ENCODE measurements at regions of chr5 and their contacts with region 1.

Region 1: DNA sequence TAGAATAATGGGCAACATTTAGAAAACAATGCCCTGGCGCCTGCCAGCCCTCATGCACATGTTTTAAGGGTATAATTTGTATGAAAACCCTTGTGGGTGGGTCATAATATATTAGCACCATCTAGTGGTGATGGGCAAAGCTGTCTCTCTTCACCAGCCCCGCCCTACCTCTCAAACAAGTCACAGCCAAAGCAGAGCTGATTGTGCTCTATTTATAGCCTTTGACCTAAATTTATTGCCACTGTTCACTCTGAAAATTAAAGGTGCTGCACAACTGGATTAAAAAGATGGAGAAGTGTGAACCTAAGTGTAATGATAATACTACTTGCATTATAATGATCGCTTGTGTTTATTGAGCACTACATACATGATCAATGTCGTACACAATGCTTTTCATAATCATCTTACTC is 131.9 kb upstream of the ANKH start:
- DNase-seq: peak; percentile 53
- H3K4me3 Mint-ChIP-seq: no peak overlapping the region
- H3K27ac Mint-ChIP-seq: no peak overlapping the region
- H3K4me1 Mint-ChIP-seq: peaks cover 21% of the 10 kb centered on the region
- H3K27me3 Mint-ChIP-seq: peaks cover 4% of the 10 kb centered on the region
- CTCF ChIP-seq: peak; percentile 60

Region 2: DNA sequence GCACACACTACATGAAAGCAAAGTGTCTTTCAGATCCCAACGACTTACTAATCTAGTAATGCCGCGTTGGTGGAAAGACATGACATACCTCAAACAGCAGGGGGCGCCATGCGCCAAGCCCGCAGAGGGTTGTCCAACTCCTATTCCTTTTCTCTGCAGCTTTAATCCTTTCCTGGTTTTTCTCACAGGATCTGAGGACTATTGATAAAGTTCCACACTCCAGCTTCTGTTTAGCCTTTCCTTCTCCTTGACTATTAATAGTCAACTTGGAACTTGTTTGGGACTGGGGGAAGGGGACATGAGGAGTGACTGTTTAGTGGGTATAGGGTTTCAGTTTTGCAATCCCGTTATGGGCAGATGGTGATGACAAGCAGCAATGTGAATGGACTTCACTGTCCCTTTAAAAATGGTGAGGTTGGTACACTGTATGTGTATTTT is 276.1 kb before region 1 on chr5:
- CTCF ChIA-PET with region 1: interaction called, 9 read pairs
- intact Hi-C with region 1: loop called (anchors 1 kb)
- DNase-seq: peak; percentile 88
- H3K4me3 Mint-ChIP-seq: no peak overlapping the region
- H3K27ac Mint-ChIP-seq: no peak overlapping the region
- H3K4me1 Mint-ChIP-seq: peaks cover 24% of the 10 kb centered on the region
- H3K27me3 Mint-ChIP-seq: no peaks in the 10 kb centered on the region
- CTCF ChIP-seq: peak; percentile 95

Region 3: DNA sequence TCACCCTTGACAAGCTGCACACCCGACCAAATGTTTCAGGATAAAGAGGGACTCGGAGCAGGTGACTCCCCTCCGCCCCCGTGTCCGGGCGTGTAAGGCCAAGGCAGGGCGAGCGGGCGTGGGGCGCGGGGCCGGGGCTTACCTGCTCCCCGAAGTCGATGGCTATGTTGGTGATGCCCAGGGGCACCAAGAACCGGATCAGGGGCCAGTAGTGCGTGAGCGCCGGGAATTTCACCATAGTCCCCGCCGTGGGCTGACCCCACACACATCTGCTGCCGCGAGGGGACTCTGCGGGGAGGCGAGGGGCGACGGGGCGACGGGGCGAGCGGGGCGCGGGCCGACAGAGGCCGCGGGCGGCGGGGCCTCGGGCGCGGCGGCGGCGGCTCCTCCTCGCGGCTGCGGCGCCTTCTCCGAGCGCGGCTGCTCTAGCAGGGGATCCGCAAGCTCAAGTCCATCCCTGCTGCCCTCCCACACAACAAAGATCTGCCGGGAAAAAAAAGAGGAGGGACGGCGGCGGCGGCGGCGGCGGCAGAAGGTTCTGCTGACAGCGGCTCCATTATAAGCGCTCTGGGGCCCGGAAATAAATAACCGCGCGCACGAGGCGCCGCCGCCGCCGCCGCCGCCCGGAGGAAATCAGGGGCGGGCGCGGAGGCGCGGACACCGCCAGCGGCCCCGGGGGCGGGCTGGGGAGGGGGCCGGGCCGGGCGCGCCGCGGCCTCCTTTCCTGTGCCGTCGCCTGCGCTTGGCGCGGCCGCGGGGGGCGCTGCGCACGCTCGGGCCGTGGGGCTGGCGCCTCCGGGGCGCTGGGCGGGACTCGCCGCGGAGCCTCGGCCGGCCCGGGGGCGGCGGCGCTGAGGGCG is 132.1 kb before region 1 on chr5 and contains the start of gene ANKH:
- CTCF ChIA-PET with region 1: interaction called, 4 read pairs
- intact Hi-C with region 1: loop called (anchors 2 kb)
- DNase-seq: peak; percentile 88
- H3K4me3 Mint-ChIP-seq: peak within 1 kb of the TSS; percentile 70
- H3K27ac Mint-ChIP-seq: peak within 1 kb of the TSS; percentile 5
- H3K4me1 Mint-ChIP-seq: peaks cover 22% of the 10 kb centered on the region
- H3K27me3 Mint-ChIP-seq: no peaks in the 10 kb centered on the region
- CTCF ChIP-seq: no peak
- total RNA-seq, gene ANKH: 42.1 and 53.2 TPM in 2 replicates

Region 4: DNA sequence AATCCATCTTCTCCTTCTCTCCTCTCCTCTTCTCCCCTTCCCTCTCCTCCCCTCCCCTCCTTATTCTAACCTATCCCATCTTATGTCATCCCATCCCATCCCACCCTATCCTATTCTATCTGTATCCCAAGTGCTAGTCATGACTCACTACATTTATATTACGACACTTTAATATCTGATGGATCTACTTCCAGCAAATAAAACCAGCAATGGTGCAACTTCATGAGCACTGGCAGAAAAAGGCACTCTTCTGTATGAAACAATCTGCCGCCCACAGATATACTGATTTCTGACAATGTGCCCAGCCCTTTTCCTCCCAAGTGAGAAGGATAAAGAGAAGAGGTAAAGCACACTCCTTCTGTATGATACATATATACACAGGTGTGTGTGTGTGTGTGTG is 45.3 kb before region 1 on chr5:
- CTCF ChIA-PET with region 1: interaction called, 30 read pairs
- intact Hi-C with region 1: loop called (anchors 1 kb)
- DNase-seq: no peak
- H3K4me3 Mint-ChIP-seq: no peak overlapping the region
- H3K27ac Mint-ChIP-seq: no peak overlapping the region
- H3K4me1 Mint-ChIP-seq: peaks cover 24% of the 10 kb centered on the region
- H3K27me3 Mint-ChIP-seq: no peaks in the 10 kb centered on the region
- CTCF ChIP-seq: no peak